ENCODE measurements at regions of chr19 and their contacts with region 1.

Region 1: GRCh38 chr19:53019684-53020083 is 6.0 kb downstream of the ERVV-1 start:
- DNase-seq: peak; percentile 47 to 74
- H3K4me3 ChIP-seq: no peak overlapping the region
- H3K27ac ChIP-seq: no peak overlapping the region
- H3K4me1 ChIP-seq: no peaks in the 10 kb centered on the region
- H3K27me3 ChIP-seq: no peaks in the 10 kb centered on the region
- CTCF ChIP-seq: peak; percentile 82 to 99 (median 92)
- EP300 ChIP-seq: no peak
- POLR2A ChIP-seq: no peak
- RAD21 ChIP-seq: peak; percentile 87 to 93

Region 2: DNA sequence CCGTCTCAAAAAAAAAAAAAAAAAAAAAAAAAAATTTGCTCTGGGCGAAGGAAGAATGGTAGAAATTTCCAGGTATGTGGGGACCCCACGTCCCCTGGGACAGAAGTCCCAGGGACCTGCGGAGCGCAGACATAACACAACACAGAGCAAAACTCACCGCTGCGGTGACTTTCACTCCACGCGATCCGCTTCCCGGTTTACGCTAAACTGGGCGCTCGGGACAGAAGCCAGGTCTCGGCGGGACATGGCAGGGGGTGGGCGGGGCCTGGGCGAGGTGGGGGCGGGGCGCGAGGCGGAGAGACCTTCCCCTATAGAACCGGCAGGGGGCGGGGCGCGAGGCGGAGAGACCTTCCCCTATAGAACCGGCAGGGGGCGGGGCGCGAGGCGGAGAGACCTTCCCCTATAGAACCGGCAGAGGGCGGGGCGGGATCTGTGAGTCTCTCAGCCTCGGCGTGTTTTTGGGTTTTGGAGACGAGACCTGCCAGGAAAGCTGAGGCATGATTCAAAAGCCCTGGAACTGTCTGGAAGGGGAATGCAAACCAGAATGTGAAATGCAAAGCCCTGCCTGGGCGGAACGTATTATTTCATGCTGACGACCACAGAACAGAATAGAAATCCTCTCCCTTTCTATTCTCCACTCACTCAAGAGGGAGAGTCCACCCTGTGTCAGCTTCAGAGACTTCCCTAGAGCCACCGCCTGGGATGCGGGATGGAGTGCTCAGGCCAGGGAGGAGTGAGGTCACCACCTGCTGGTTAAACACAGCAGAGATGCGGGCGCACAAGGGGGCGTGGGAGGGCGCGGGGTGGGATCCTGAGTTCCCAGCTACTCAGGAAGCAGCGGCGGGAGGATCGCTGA is 26.1 kb before region 1 on chr19:
- CTCF ChIA-PET with region 1: interaction called, 14 read pairs
- POLR2A ChIA-PET with region 1: interaction called, 3 read pairs
- DNase-seq: peak in 1 of 2 experiments; percentile 95
- H3K4me3 ChIP-seq: peak overlapping the region; percentile 40 to 62 (median 52)
- H3K27ac ChIP-seq: no peak overlapping the region
- H3K4me1 ChIP-seq: peaks cover 0 to 10% (median 3%) of the 10 kb centered on the region in 4 experiments; a peak in 4 of 7 replicates
- H3K27me3 ChIP-seq: peaks cover 5 to 18% (median 14%) of the 10 kb centered on the region in 4 experiments
- CTCF ChIP-seq: peak; percentile 22 to 76 (median 52)
- EP300 ChIP-seq: no peak
- POLR2A ChIP-seq: no peak
- RAD21 ChIP-seq: peak; percentile 21 to 47; a peak in 3 of 4 replicates

Region 3: GRCh38 chr19:53007611-53008010 is 12.1 kb before region 1 on chr19:
- CTCF ChIA-PET with region 1: interaction called, 43 read pairs
- POLR2A ChIA-PET with region 1: no interaction called
- DNase-seq: no peak
- H3K4me3 ChIP-seq: no peak overlapping the region
- H3K27ac ChIP-seq: no peak overlapping the region
- H3K4me1 ChIP-seq: no peaks in the 10 kb centered on the region; a peak in 2 of 7 replicates
- H3K27me3 ChIP-seq: no peaks in the 10 kb centered on the region; a peak in 1 of 7 replicates
- CTCF ChIP-seq: no peak
- EP300 ChIP-seq: no peak
- POLR2A ChIP-seq: no peak
- RAD21 ChIP-seq: no peak

Region 4: GRCh38 chr19:53037101-53038097 is 17.7 kb after region 1 on chr19:
- CTCF ChIA-PET with region 1: interaction called, 28 read pairs
- POLR2A ChIA-PET with region 1: no interaction called
- DNase-seq: peak in 1 of 2 experiments; percentile 58
- H3K4me3 ChIP-seq: peak overlapping the region in 2 of 4 experiments; percentile 38 to 44; a peak in 2 of 8 replicates
- H3K27ac ChIP-seq: no peak overlapping the region
- H3K4me1 ChIP-seq: no peaks in the 10 kb centered on the region
- H3K27me3 ChIP-seq: no peaks in the 10 kb centered on the region
- CTCF ChIP-seq: no peak
- EP300 ChIP-seq: no peak
- POLR2A ChIP-seq: no peak
- RAD21 ChIP-seq: no peak

Region 5: DNA sequence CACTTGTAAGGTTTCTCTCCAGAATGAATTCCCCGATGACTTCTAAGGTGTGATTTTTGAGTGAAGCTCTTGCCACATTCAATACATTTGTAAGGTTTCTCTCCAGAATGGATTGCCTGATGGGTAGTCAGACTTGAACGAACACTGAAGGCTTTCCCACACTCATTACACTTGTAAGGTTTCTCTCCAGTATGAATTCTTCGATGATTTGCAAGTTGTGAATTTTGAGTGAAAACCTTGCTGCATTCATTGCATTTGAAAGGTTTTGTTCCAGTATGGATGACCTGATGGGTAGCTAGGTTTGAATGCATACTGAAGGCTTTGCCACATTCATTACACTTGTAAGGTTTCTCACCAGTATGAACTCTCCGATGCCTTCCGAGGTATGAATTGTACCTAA is 49.1 kb after region 1 on chr19:
- CTCF ChIA-PET with region 1: no interaction called
- POLR2A ChIA-PET with region 1: no interaction called
- DNase-seq: no peak
- H3K4me3 ChIP-seq: no peak overlapping the region
- H3K27ac ChIP-seq: no peak overlapping the region
- H3K4me1 ChIP-seq: no peaks in the 10 kb centered on the region
- H3K27me3 ChIP-seq: no peaks in the 10 kb centered on the region
- CTCF ChIP-seq: no peak
- EP300 ChIP-seq: no peak
- POLR2A ChIP-seq: no peak
- RAD21 ChIP-seq: no peak

Region 6: DNA sequence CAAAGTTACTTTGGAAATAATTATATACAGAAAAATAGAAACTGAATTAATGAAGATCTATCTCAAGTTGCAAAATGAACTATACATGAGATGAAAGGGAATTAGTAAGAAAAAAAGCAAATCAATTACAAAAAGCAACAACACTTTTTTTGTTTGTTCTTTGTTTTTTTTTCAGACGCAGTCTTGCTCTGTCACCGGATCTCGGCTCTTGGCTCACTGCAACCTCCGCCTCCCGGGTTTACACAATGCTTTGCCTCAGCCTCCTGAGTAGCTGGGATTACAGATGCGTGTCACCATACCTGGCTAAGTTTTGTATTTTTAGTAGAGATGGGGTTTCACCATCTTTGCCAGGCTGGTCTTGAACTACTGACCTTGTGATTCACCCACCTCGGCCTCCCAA is 110.8 kb after region 1 on chr19:
- CTCF ChIA-PET with region 1: no interaction called
- POLR2A ChIA-PET with region 1: no interaction called
- DNase-seq: no peak
- H3K4me3 ChIP-seq: no peak overlapping the region
- H3K27ac ChIP-seq: no peak overlapping the region
- H3K4me1 ChIP-seq: peaks cover 0 to 7% (median 3%) of the 10 kb centered on the region in 4 experiments; a peak in 5 of 7 replicates
- H3K27me3 ChIP-seq: peaks cover 0 to 6% (median 4%) of the 10 kb centered on the region in 4 experiments; a peak in 4 of 7 replicates
- CTCF ChIP-seq: no peak
- EP300 ChIP-seq: no peak
- POLR2A ChIP-seq: no peak
- RAD21 ChIP-seq: no peak